Mucosa of descending colon (tissue), 3 donors: ENCODE measurements at regions of chr9 and their contacts with region 1.

Region 1: DNA sequence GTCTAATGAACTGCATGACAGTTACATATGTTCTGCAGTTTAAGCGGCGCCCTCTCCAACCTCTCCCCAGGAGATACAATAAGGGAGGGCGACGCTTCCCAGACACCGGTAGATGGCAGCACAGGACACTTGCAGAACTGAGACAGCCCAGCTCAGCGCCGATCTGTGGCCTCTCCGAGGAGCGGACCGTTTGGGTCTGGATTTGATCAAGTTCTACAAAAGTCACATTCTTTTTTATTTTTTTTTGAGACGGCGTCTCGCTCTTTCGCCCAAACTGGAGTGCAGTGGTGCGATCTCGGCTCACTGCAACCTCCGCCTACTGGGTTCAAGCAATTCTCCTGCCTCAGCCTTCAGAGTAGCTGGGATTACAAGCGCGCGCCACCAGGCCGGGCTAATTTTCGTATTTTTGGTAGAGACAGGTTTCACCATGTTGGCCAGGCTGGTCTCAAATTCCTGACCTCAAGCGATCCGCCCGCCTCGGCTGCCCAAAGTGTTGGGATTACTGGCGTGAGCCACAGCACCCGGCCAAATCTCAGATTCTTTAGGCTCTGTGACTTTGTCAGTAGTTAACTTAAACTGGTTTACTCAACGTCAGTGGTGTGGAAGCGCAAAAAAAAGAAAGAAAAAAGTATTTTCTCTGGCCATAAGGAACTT is 1.4 kb upstream of the ATOSB start:
- DNase-seq: peak; percentile 83 to 94 (median 90)
- ATAC-seq: peak; percentile 68
- H3K4me3 ChIP-seq: no peak overlapping the region
- H3K4me1 ChIP-seq: peaks cover 28% of the 10 kb centered on the region
- CTCF ChIP-seq: peak; percentile 90

Region 2: GRCh38 chr9:35060548-35061207 is 56.3 kb before region 1 on chr9:
- intact Hi-C with region 1: no loop called
- DNase-seq: no peak
- ATAC-seq: peak; percentile 41
- H3K4me3 ChIP-seq: no peak overlapping the region
- H3K4me1 ChIP-seq: no peaks in the 10 kb centered on the region
- CTCF ChIP-seq: no peak

Region 3: GRCh38 chr9:35179347-35180287 is 62.6 kb after region 1 on chr9:
- intact Hi-C with region 1: no loop called
- DNase-seq: no peak
- ATAC-seq: peak; percentile 49
- H3K4me3 ChIP-seq: no peak overlapping the region
- H3K4me1 ChIP-seq: peaks cover 31% of the 10 kb centered on the region
- CTCF ChIP-seq: no peak

Region 4: GRCh38 chr9:35258676-35259474 is 141.8 kb after region 1 on chr9:
- intact Hi-C with region 1: loop called (anchors 5 kb)
- DNase-seq: peak; percentile 64 to 83 (median 77)
- ATAC-seq: peak; percentile 88
- H3K4me3 ChIP-seq: no peak overlapping the region
- H3K4me1 ChIP-seq: peaks cover 14% of the 10 kb centered on the region
- CTCF ChIP-seq: peak; percentile 40

Region 5: GRCh38 chr9:35470894-35471293 is 353.9 kb after region 1 on chr9:
- intact Hi-C with region 1: loop called in 1 of 2 experiments (anchors 10 kb)
- DNase-seq: no peak
- ATAC-seq: peak; percentile 18
- H3K4me3 ChIP-seq: no peak overlapping the region
- H3K4me1 ChIP-seq: no peaks in the 10 kb centered on the region
- CTCF ChIP-seq: no peak